Gastrocnemius medialis (tissue), 4 donors: ENCODE measurements at regions of chr7 and their contacts with region 1.

Region 1: DNA sequence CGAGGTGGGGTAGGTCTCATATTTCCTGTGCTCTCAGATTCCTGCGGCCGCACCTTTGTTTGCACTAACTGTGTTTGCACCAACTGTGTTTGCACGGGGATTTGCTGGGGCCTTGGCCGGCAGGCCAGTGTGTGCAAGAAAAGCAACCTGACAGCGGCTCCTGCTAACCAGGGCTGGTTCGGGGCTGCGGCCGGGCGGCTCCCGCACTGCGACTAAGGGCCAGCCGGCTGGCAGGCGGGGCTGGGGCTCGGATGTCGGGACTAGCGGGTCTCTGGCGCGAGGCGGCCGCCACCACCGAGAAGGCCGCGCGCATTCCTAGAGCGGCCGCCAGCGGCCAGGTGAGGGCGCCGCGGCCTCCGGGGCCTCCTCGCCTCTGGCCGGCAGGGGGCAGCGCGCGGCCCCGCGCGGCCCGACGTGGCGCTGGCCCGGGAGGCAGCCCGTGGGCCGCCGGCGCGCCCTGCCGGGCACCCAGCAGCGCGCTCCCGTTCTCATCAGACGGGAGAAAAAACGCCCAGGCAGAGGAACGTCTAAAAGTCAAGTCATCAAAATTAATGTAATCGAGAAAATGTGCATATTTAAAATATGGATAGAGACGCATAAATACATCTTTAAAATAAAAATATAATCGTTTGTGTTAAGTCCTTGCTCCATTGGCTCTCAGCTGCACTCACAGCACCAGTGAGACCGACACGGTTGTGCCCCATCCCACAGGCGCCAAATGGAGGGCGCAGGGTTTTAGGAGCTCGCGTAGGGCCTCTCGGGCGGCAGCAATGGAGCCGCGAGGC is 38.5 kb downstream of the ZNF777 start:
- DNase-seq: peak in 1 of 2 donors; percentile 26
- ATAC-seq: peak; percentile 83 to 88
- H3K4me3 ChIP-seq: peak overlapping the region; percentile 49 to 67 (median 54)
- H3K27ac ChIP-seq: no peak overlapping the region
- H3K4me1 ChIP-seq: peaks cover 0 to 8% of the 10 kb centered on the region in 2 donors
- H3K27me3 ChIP-seq: peaks cover 0 to 9% (median 0%) of the 10 kb centered on the region in 3 donors
- CTCF ChIP-seq: peak; percentile 21 to 70 (median 60)
- POLR2A ChIP-seq: no peak

Region 2: GRCh38 chr7:149460493-149461277 is 38.4 kb after region 1 on chr7 and contains the start of gene ZNF777:
- in situ Hi-C with region 1: no loop called
- intact Hi-C with region 1: loop called (anchors 5 kb)
- DNase-seq: peak; percentile 70 to 80
- ATAC-seq: peak; percentile 97 to 98
- H3K4me3 ChIP-seq: peak within 1 kb of the TSS; percentile 60 to 93 (median 74)
- H3K27ac ChIP-seq: peak within 1 kb of the TSS; percentile 50 to 77 (median 72)
- H3K4me1 ChIP-seq: peaks cover 14 to 15% of the 10 kb centered on the region in 2 donors
- H3K27me3 ChIP-seq: no peaks in the 10 kb centered on the region
- CTCF ChIP-seq: peak; percentile 22 to 51 (median 39)
- POLR2A ChIP-seq: no peak
- total RNA-seq, gene ZNF777: 7.6 to 17.6 (median 15.1) TPM

Region 3: DNA sequence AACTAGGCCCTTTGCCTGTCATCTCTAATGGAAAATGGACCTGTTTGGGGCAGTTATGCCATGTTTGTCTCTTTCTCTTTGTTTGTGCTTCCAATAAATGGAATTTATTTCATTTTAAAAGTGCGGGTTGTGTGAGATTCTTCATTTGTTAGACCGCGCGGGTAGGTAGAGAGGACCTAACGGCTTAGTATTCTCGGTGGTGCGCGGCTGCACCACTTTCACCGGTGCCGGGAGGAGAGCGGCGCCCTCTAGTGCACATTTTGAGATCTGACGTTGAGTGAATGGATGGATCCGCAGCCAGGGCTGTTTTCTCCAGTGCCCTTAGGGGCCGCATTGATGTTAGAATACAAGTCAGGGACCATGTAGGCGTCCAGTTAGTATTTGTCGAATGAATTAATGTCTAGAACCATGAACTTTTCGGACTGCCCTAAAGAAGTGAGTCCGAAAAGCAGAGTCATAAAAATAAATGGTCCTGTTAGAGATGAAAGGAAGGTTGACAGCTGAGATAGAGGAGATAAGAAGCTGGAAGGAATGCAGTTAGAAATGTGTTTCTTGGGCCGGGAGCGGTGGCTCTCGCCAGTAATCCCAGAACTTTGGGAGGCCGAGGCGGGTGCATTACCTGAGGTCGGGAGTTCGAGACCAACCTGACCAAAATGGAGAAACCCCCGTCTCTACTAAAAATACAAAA is 998.8 kb after region 1 on chr7:
- in situ Hi-C with region 1: no loop called
- intact Hi-C with region 1: no loop called
- DNase-seq: peak; percentile 57 to 65
- ATAC-seq: peak; percentile 97 to 99
- H3K4me3 ChIP-seq: peak overlapping the region in 1 of 4 donors; percentile 32
- H3K27ac ChIP-seq: no peak overlapping the region
- H3K4me1 ChIP-seq: no peaks in the 10 kb centered on the region
- H3K27me3 ChIP-seq: no peaks in the 10 kb centered on the region
- CTCF ChIP-seq: peak; percentile 66 to 94 (median 77)
- POLR2A ChIP-seq: no peak